Activated T-helper 2 cell treated with anti-CD3 and anti-CD28 coated beads, Interferon-gamma antibody, Interleukin-2, Interleukin-4, amounts not matched to agents 10 μg/mL and 5 μg/mL and 100 μg/mL, durations not matched to agents 14 hours and 24 hours and 36 hours (primary cell): ENCODE measurements at regions of chr15 and their contacts with region 1.

Region 1: GRCh38 chr15:41774062-41774881 is at the start of gene MAPKBP1:
- DNase-seq: peak; percentile 99
- H3K4me3 Mint-ChIP-seq: peak within 1 kb of the TSS; percentile 90
- H3K27ac Mint-ChIP-seq: peak within 1 kb of the TSS; percentile 90
- H3K4me1 Mint-ChIP-seq: peaks cover 49% of the 10 kb centered on the region
- H3K27me3 Mint-ChIP-seq: no peaks in the 10 kb centered on the region
- total RNA-seq, gene MAPKBP1: 24.7 and 25.7 TPM in 2 replicates

Region 2: DNA sequence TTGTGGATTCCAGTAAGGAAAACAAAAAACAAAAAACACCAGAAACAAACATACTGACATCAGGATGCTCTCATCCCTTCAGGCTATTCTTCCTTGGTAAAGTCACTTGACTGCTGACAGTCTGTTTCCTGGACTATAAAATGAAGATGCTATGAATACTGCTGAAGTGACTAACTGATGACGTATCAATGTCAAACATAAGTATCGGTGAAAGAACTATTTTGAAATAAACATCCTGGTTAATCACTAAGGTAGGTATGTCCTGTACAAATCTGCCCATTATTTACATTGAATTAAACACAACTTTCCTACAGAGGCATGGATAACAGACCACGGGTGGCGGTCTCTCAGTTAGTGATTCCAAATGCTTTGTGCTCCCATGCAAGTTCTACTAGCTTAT is 775.1 kb before region 1 on chr15:
- intact Hi-C with region 1: no loop called
- DNase-seq: no peak
- H3K4me3 Mint-ChIP-seq: no peak overlapping the region
- H3K27ac Mint-ChIP-seq: no peak overlapping the region
- H3K4me1 Mint-ChIP-seq: peaks cover 9% of the 10 kb centered on the region
- H3K27me3 Mint-ChIP-seq: no peaks in the 10 kb centered on the region

Region 3: GRCh38 chr15:41443275-41443674 is 331.0 kb before region 1 on chr15:
- intact Hi-C with region 1: no loop called
- DNase-seq: no peak
- H3K4me3 Mint-ChIP-seq: no peak overlapping the region
- H3K27ac Mint-ChIP-seq: peak overlapping the region; percentile 73
- H3K4me1 Mint-ChIP-seq: peaks cover 12% of the 10 kb centered on the region
- H3K27me3 Mint-ChIP-seq: no peaks in the 10 kb centered on the region

Region 4: DNA sequence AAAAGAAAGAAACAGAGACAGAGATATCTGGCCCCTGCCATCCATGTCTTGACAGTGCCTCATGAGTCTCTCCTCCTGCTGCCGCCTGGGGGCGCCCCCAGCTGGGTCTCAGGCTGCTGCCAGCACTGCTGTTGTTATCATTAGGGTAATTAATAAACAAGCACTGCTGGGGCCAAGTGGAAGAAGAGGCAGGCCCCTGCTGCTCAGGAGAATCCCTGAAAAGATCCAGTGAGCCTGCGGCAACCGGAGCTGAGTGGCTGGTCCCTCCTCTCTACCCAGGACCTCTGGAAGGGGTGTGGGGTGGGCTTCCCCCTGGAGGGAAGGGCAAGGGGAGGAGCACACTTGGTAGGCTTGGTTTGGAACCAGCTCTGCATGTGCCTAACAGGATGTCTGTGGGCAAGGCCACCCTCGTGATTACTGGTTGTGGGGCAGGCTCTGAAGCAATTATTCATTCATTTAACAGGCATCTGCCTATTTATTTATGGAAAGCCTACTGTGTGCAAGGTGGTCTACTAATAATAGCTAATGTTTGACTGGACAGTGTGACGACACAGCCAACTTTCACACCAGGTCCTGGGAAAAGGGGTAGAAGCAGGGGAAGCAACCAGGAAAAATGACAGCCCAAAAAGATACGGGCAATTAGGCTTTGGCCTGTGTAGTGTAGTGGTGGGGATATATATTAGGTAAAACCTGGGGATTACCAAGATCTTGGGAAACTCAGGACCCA is 216.4 kb before region 1 on chr15:
- intact Hi-C with region 1: loop called (anchors 5 kb)
- DNase-seq: peak; percentile 62
- H3K4me3 Mint-ChIP-seq: peak overlapping the region; percentile 83
- H3K27ac Mint-ChIP-seq: peak overlapping the region; percentile 71
- H3K4me1 Mint-ChIP-seq: peaks cover 20% of the 10 kb centered on the region
- H3K27me3 Mint-ChIP-seq: peaks cover 42% of the 10 kb centered on the region

Region 5: GRCh38 chr15:41790756-41791546 is 16.7 kb after region 1 on chr15:
- intact Hi-C with region 1: loop called (anchors 2 kb)
- DNase-seq: no peak
- H3K4me3 Mint-ChIP-seq: peak overlapping the region; percentile 41
- H3K27ac Mint-ChIP-seq: peak overlapping the region; percentile 73
- H3K4me1 Mint-ChIP-seq: peaks cover 46% of the 10 kb centered on the region
- H3K27me3 Mint-ChIP-seq: no peaks in the 10 kb centered on the region

Region 6: DNA sequence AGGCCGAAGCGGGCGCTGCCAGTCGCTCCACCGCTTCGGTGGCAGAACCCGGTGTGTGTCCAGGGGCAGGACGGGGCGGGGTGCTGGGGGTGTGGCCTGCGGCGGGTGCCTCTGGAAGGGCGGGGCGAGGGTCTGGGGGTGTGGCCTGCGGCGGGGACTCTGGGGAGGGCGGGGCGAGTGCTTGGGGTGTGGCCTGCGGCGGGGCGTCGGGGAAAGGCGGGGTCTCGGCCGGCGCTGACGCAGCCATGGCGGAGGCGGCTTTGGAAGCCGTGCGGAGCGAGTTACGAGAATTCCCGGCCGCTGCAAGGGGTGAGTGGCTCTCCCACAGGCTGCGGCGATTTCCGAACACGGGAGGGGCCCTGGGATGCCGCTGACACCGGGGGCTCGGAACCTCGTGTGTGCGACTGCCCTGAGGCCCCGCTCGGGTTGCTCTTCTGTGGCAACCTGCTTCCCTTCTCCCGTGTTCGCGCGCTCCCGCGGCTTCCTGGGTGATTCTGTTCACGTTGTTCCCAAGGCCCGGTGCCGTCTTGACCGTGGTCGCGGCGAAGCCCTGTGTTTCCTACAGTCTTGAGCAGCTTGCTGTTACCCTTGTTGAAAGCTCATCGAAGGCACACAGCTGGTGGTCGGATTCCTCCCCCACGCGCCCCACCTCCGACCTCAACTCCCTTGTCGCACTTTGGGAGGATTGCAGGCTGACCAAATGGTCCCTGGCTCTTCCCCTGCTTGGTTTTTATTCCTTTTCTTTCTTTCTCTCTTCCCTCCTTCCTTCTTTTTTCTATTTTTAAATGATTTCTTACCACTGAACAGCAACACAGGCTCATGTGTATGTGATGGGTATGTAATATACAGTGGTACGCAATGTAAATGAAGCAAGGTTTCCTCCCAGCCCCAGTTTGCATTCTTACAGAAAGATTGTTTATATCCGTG is 53.9 kb after region 1 on chr15 and contains the start of gene JMJD7:
- intact Hi-C with region 1: loop called (anchors 1 kb)
- DNase-seq: peak; percentile 90
- H3K4me3 Mint-ChIP-seq: peak within 1 kb of the TSS; percentile 95
- H3K27ac Mint-ChIP-seq: peak within 1 kb of the TSS; percentile 77
- H3K4me1 Mint-ChIP-seq: peaks cover 33% of the 10 kb centered on the region
- H3K27me3 Mint-ChIP-seq: no peaks in the 10 kb centered on the region
- total RNA-seq, gene JMJD7: 15.7 and 20.0 TPM in 2 replicates

Region 7: DNA sequence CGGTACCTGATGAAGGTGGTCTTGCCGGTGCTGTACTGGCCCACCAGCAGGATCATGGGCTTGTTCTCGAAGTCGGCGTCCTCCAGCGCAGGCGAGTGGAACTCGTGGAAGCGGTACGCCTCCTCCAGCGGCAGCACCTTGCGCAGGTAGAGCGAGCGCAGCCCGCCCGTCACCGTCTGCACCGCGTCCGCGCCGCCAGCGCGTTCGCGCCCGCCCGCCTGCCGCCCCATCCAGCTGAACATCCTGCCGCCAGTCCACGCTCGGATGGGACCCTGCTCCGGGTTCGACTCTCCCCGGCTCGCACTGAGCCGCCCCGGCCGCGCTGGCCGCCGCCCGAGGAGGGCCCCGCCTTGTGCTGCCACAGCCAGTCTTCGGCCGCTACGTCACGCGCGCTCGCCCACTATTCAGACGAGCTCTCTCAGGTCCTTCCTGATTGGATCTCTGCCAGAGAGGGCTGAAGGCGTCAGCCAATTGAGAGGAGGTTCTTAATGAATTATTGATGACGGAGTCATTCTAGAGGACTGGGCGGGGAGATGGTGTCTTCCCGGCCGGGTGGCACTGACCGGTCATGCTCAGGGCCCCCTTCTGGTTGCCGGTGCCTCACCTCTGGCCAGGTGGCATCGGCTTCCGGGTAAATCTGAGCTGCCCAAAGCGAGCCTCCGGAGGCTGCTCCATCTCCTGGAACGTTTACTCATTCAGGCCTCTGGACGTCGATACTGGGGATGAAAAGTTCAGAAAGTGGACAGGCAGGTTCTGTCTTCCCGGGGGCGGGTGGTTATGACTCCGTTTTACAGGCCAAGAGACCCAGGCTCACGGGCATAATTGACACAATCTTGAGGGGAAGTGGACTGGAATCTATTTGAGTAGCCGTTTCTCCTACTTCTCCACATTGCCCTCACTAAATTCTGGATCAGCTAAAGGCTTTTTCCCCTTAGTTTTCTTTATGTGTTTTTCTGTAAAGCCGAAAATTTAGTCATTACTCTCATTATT is 198.3 kb after region 1 on chr15 and contains the start of gene EHD4:
- intact Hi-C with region 1: loop called (anchors 2 kb)
- DNase-seq: peak; percentile 94
- H3K4me3 Mint-ChIP-seq: peak within 1 kb of the TSS; percentile 83
- H3K27ac Mint-ChIP-seq: peak within 1 kb of the TSS; percentile 87
- H3K4me1 Mint-ChIP-seq: peaks cover 50% of the 10 kb centered on the region
- H3K27me3 Mint-ChIP-seq: peaks cover 12% of the 10 kb centered on the region
- total RNA-seq, gene EHD4: 22.3 and 22.7 TPM in 2 replicates